Activated naive CD4-positive, alpha-beta T cell treated with anti-CD3 and anti-CD28 coated beads for 36 hours (primary cell): ENCODE measurements at regions of chr4 and their contacts with region 1.

Region 1: GRCh38 chr4:3106339-3107186 is 32.1 kb downstream of the HTT start:
- DNase-seq: peak; percentile 98
- H3K4me3 Mint-ChIP-seq: no peak overlapping the region
- H3K27ac Mint-ChIP-seq: peak overlapping the region; percentile 34
- H3K4me1 Mint-ChIP-seq: peaks cover 17% of the 10 kb centered on the region
- H3K27me3 Mint-ChIP-seq: no peaks in the 10 kb centered on the region

Region 2: GRCh38 chr4:3085948-3086655 is 20.5 kb before region 1 on chr4:
- CTCF ChIA-PET with region 1: interaction called, 4 read pairs
- intact Hi-C with region 1: loop called (anchors 1 kb)
- DNase-seq: no peak
- H3K4me3 Mint-ChIP-seq: peak overlapping the region; percentile 23
- H3K27ac Mint-ChIP-seq: peak overlapping the region; percentile 86
- H3K4me1 Mint-ChIP-seq: peaks cover 69% of the 10 kb centered on the region
- H3K27me3 Mint-ChIP-seq: no peaks in the 10 kb centered on the region

Region 3: DNA sequence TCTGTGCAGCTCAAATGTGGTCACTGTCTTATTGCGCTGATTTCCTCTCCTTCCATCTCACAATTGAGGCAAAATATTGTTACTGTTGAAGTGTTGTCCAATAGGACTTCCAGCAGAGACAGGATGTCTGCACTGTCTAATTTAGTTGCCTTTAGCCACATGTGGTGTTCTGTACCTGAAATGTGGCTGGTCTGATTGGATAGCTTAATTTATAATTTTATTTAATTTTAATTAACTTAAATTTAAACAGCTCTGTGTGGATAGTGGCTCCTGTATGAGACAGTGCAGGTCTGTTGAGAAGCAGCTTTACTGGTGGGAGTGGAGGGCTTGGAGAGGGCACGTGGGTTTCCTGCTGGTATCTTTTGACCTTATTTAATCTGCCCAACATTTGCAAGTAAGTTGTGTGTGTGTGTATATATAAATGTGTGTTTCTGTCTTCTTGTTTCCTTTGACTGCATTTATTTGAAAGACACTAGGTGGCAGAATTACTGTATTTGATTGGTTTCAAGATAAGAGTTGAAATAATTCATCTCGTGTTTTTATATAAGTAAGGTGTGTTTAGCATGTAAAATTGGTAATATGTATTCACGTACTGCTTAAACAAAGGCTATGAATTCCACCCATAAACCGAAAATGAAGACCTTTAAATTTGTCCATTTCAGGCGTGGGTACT is 87.1 kb after region 1 on chr4:
- CTCF ChIA-PET with region 1: interaction called, 3 read pairs
- intact Hi-C with region 1: loop called (anchors 2 kb)
- DNase-seq: no peak
- H3K4me3 Mint-ChIP-seq: no peak overlapping the region
- H3K27ac Mint-ChIP-seq: no peak overlapping the region
- H3K4me1 Mint-ChIP-seq: peaks cover 49% of the 10 kb centered on the region
- H3K27me3 Mint-ChIP-seq: no peaks in the 10 kb centered on the region

Region 4: GRCh38 chr4:3346146-3346545 is 239.6 kb after region 1 on chr4:
- CTCF ChIA-PET with region 1: interaction called, 5 read pairs
- intact Hi-C with region 1: loop called (anchors 2 kb)
- DNase-seq: peak; percentile 71
- H3K4me3 Mint-ChIP-seq: no peak overlapping the region
- H3K27ac Mint-ChIP-seq: no peak overlapping the region
- H3K4me1 Mint-ChIP-seq: peaks cover 18% of the 10 kb centered on the region
- H3K27me3 Mint-ChIP-seq: no peaks in the 10 kb centered on the region

Region 5: GRCh38 chr4:3531879-3532713 is 425.5 kb after region 1 on chr4 and contains the start of gene LRPAP1:
- CTCF ChIA-PET with region 1: no interaction called
- intact Hi-C with region 1: loop called (anchors 1 kb)
- DNase-seq: peak; percentile 83
- H3K4me3 Mint-ChIP-seq: peak within 1 kb of the TSS; percentile 100
- H3K27ac Mint-ChIP-seq: peak within 1 kb of the TSS; percentile 90
- H3K4me1 Mint-ChIP-seq: peaks cover 32% of the 10 kb centered on the region
- H3K27me3 Mint-ChIP-seq: peaks cover 6% of the 10 kb centered on the region
- total RNA-seq, gene LRPAP1: 50.2 TPM

Region 6: GRCh38 chr4:4245172-4245571 is 1138.6 kb after region 1 on chr4:
- CTCF ChIA-PET with region 1: no interaction called
- intact Hi-C with region 1: no loop called
- DNase-seq: no peak
- H3K4me3 Mint-ChIP-seq: no peak overlapping the region
- H3K27ac Mint-ChIP-seq: no peak overlapping the region
- H3K4me1 Mint-ChIP-seq: peaks cover 27% of the 10 kb centered on the region
- H3K27me3 Mint-ChIP-seq: no peaks in the 10 kb centered on the region